CD8-positive, alpha-beta memory T cell (primary cell): ENCODE measurements at regions of chr20 and their contacts with region 1.

Region 1: DNA sequence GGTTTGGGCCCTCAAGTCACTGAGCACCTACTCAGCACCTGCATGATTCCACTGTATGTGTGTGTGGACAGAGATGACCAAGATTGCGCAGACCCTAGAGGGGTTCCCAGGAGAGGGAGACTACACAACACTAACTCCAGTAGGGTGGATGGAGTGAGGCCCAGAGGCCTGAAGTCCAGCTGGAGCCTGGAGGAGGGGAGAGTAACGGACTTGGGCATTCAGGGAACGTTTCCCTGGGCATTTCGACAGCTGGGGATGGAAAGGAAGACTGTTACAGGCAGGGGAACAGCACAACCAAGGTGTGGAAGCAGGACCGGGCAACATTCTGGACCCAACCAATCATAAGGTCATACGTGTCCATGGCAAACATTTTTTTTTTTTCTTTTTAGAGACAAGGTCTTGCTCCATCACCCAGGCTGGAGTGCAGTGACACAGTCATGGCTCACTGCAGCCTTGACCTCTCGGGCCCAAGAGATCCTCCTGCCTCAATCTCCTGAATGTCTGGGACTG is 11.1 kb upstream of the CEBPB start:
- DNase-seq: no peak
- H3K4me3 ChIP-seq: no peak overlapping the region
- H3K4me3 Mint-ChIP-seq: no peak overlapping the region
- H3K27ac ChIP-seq: no peak overlapping the region
- H3K27ac Mint-ChIP-seq: no peak overlapping the region
- H3K4me1 ChIP-seq: no peaks in the 10 kb centered on the region
- H3K4me1 Mint-ChIP-seq: peaks cover 0 to 5% (median 0%) of the 10 kb centered on the region in 3 donors
- H3K27me3 ChIP-seq: no peaks in the 10 kb centered on the region
- H3K27me3 Mint-ChIP-seq: peaks cover 3 to 8% of the 10 kb centered on the region in 2 donors

Region 2: GRCh38 chr20:49982346-49983122 is 197.0 kb before region 1 on chr20 and contains the start of gene SNAI1:
- CTCF ChIA-PET with region 1: interaction called, 18 read pairs
- POLR2A ChIA-PET with region 1: interaction called, 7 read pairs
- DNase-seq: peak; percentile 75 to 92 (median 80)
- H3K4me3 ChIP-seq: peak within 1 kb of the TSS; percentile 67
- H3K4me3 Mint-ChIP-seq: peak within 1 kb of the TSS; percentile 66 to 78 (median 74)
- H3K27ac ChIP-seq: peak within 1 kb of the TSS; percentile 67
- H3K27ac Mint-ChIP-seq: peak within 1 kb of the TSS in 7 of 8 donors; percentile 43 to 97 (median 80)
- H3K4me1 ChIP-seq: peaks cover 24% of the 10 kb centered on the region
- H3K4me1 Mint-ChIP-seq: peaks cover 18 to 39% (median 26%) of the 10 kb centered on the region in 3 donors
- H3K27me3 ChIP-seq: no peaks in the 10 kb centered on the region
- H3K27me3 Mint-ChIP-seq: peaks cover 2 to 3% of the 10 kb centered on the region in 2 donors
- total RNA-seq, gene SNAI1: 0.42 to 0.49 TPM

Region 3: GRCh38 chr20:50115591-50116372 is 63.8 kb before region 1 on chr20:
- CTCF ChIA-PET with region 1: interaction called, 25 read pairs
- POLR2A ChIA-PET with region 1: interaction called, 12 read pairs
- DNase-seq: peak; percentile 84 to 92 (median 86)
- H3K4me3 ChIP-seq: peak overlapping the region; percentile 82
- H3K4me3 Mint-ChIP-seq: peak overlapping the region; percentile 77 to 93 (median 84)
- H3K27ac ChIP-seq: peak overlapping the region; percentile 49
- H3K27ac Mint-ChIP-seq: peak overlapping the region; percentile 71 to 97 (median 94)
- H3K4me1 ChIP-seq: peaks cover 44% of the 10 kb centered on the region
- H3K4me1 Mint-ChIP-seq: peaks cover 46 to 57% (median 50%) of the 10 kb centered on the region in 3 donors
- H3K27me3 ChIP-seq: no peaks in the 10 kb centered on the region
- H3K27me3 Mint-ChIP-seq: no peaks in the 10 kb centered on the region

Region 4: GRCh38 chr20:50120897-50121693 is 58.5 kb before region 1 on chr20:
- CTCF ChIA-PET with region 1: interaction called, 25 read pairs
- POLR2A ChIA-PET with region 1: interaction called, 12 read pairs
- DNase-seq: peak; percentile 40 to 76 (median 56)
- H3K4me3 ChIP-seq: no peak overlapping the region
- H3K4me3 Mint-ChIP-seq: no peak overlapping the region
- H3K27ac ChIP-seq: no peak overlapping the region
- H3K27ac Mint-ChIP-seq: peak overlapping the region in 1 of 8 donors; percentile 4
- H3K4me1 ChIP-seq: peaks cover 4% of the 10 kb centered on the region
- H3K4me1 Mint-ChIP-seq: peaks cover 2 to 11% (median 3%) of the 10 kb centered on the region in 3 donors
- H3K27me3 ChIP-seq: no peaks in the 10 kb centered on the region
- H3K27me3 Mint-ChIP-seq: no peaks in the 10 kb centered on the region

Region 5: DNA sequence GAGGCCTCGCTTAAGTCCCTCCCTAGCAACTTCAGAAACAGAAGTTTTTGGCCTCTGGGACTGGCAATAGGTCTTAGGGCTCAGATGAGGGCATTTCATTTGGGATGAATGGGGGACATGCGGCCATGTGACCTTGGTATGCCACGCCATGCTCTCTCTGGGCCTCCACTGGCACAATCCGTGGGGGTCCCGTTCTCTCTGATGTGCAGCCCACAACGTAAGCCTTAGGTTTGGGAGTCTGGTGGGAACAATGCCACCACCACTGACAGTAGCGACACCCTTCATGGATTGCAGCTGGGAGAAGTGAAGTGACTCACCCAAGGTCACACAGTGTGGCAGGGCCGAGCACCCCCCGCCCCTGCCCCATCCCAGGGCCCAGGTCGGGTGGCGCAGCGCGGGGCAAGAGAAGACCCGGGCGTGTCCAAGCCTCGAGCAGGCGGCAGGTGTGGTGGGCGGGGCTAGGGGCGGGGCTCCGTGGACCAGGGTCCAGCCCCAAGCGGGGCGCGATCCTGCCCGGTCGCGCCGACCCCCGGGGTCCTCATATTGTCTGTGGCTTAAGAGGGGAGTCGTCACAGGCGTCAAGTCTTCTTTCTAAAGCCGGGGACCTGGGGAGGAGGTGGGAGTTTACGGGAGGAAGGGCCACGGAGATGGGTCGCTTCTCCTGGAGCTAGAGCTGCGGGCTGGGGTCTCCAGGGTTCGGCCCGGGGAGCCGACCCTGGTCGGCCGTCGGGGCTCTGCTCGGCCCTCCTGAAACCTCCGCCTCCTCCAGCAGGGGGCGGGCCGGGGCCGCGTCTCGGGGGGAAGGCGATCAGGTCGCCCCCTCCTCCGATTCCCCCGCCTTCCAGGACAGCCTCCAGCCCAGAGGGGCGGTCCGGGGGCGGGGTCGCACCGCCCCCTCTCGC is 10.4 kb after region 1 on chr20:
- CTCF ChIA-PET with region 1: interaction called, 16 read pairs
- POLR2A ChIA-PET with region 1: no interaction called
- DNase-seq: peak; percentile 73 to 90 (median 80)
- H3K4me3 ChIP-seq: no peak overlapping the region
- H3K4me3 Mint-ChIP-seq: peak overlapping the region; percentile 64 to 77 (median 66)
- H3K27ac ChIP-seq: peak overlapping the region; percentile 85
- H3K27ac Mint-ChIP-seq: peak overlapping the region in 7 of 8 donors; percentile 15 to 87 (median 50)
- H3K4me1 ChIP-seq: peaks cover 22% of the 10 kb centered on the region
- H3K4me1 Mint-ChIP-seq: peaks cover 28 to 35% (median 28%) of the 10 kb centered on the region in 3 donors
- H3K27me3 ChIP-seq: no peaks in the 10 kb centered on the region
- H3K27me3 Mint-ChIP-seq: peaks cover 4 to 11% of the 10 kb centered on the region in 2 donors

Region 6: GRCh38 chr20:50464026-50464724 is 284.6 kb after region 1 on chr20:
- CTCF ChIA-PET with region 1: interaction called, 51 read pairs
- POLR2A ChIA-PET with region 1: no interaction called
- DNase-seq: peak; percentile 36 to 74 (median 49)
- H3K4me3 ChIP-seq: no peak overlapping the region
- H3K4me3 Mint-ChIP-seq: peak overlapping the region in 1 of 7 donors; percentile 46
- H3K27ac ChIP-seq: no peak overlapping the region
- H3K27ac Mint-ChIP-seq: peak overlapping the region in 1 of 8 donors; percentile 38
- H3K4me1 ChIP-seq: peaks cover 14% of the 10 kb centered on the region
- H3K4me1 Mint-ChIP-seq: peaks cover 2 to 8% (median 5%) of the 10 kb centered on the region in 3 donors
- H3K27me3 ChIP-seq: peaks cover 3% of the 10 kb centered on the region
- H3K27me3 Mint-ChIP-seq: peaks cover 0 to 2% of the 10 kb centered on the region in 2 donors